Transverse colon (tissue), 4 donors: ENCODE measurements at regions of chr15 and their contacts with region 1.

Region 1: GRCh38 chr15:91769894-91770293 is 83.6 kb upstream of the SLCO3A1 start:
- DNase-seq: no peak
- H3K4me3 ChIP-seq: no peak overlapping the region
- H3K27ac ChIP-seq: no peak overlapping the region
- H3K4me1 ChIP-seq: no peaks in the 10 kb centered on the region
- H3K27me3 ChIP-seq: no peaks in the 10 kb centered on the region
- CTCF ChIP-seq: no peak
- EP300 ChIP-seq: no peak
- POLR2A ChIP-seq: no peak

Region 2: GRCh38 chr15:91664224-91664836 is 105.6 kb before region 1 on chr15:
- in situ Hi-C with region 1: no loop called
- intact Hi-C with region 1: no loop called
- DNase-seq: no peak
- H3K4me3 ChIP-seq: no peak overlapping the region
- H3K27ac ChIP-seq: no peak overlapping the region
- H3K4me1 ChIP-seq: no peaks in the 10 kb centered on the region
- H3K27me3 ChIP-seq: no peaks in the 10 kb centered on the region
- CTCF ChIP-seq: no peak
- EP300 ChIP-seq: no peak
- POLR2A ChIP-seq: no peak

Region 3: DNA sequence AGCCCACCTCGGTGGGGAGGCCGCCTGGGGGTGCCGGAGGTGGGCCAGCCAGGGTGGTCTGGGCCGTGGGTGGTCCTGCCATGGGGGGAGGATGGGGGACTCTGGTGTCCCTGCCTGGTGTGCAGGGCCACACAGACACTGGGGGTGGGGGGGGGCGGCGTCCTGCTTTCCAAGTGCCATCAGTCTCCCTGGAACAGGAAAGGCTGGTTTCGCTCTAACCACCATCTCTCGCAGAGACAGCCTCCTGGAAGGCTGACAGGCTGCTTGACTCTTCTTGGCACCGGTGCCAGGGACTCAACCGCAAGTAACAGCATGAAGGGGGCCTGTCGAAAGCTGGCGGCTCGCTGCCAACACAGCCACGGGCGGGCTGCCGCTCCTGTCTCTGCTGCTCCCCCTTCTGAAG is 1278.9 kb after region 1 on chr15:
- in situ Hi-C with region 1: no loop called
- intact Hi-C with region 1: no loop called
- DNase-seq: peak; percentile 43
- H3K4me3 ChIP-seq: no peak overlapping the region
- H3K27ac ChIP-seq: peak overlapping the region in 3 of 4 donors; percentile 20 to 59 (median 32)
- H3K4me1 ChIP-seq: peaks cover 0 to 8% (median 3%) of the 10 kb centered on the region in 4 donors
- H3K27me3 ChIP-seq: no peaks in the 10 kb centered on the region
- CTCF ChIP-seq: no peak
- EP300 ChIP-seq: no peak
- POLR2A ChIP-seq: no peak

Region 4: DNA sequence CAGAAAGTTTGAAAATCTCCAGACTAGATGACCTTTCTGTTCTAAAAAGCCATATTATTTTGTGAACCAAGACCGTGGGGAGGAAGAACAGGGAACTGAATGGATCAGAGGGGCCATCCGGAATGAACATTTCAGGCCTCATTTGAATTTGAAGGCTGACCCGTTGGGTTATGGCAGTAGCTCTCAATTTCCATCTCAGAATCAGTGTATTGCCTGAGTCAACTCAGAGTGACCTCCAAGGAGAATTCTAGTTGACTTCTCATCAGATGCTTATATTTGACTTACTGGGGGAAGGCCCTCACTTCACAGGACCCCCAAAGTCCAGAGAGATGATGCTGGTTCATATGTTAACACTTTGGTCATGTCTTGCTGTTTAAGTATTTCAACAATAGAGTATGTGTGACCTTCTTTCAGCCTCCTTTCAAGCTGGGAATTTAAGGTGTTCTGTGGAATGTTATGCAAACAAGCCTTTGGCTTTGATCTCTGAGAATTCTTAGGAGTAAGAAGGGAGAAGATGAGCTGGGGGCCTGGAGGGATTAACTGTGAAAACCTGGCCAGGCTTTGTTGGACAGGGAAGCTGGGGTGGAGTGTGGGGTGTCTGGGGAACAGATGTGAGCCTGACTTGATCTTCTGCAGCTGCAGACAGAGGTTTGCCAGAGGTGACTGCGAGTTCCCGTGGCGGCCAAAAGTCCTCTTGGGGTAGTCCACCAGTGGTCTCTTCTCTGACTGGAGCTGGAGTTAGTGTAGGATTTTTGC is 1430.4 kb after region 1 on chr15:
- in situ Hi-C with region 1: no loop called
- intact Hi-C with region 1: loop called (anchors 10 kb)
- DNase-seq: no peak
- H3K4me3 ChIP-seq: no peak overlapping the region
- H3K27ac ChIP-seq: no peak overlapping the region
- H3K4me1 ChIP-seq: no peaks in the 10 kb centered on the region
- H3K27me3 ChIP-seq: peaks cover 4% of the 10 kb centered on the region
- CTCF ChIP-seq: no peak
- EP300 ChIP-seq: no peak
- POLR2A ChIP-seq: no peak